ENCODE measurements at regions of chr6 and their contacts with region 1.

Region 1: GRCh38 chr6:160455541-160456213 is 107.5 kb downstream of the SLC22A3 start:
- DNase-seq: peak; percentile 28
- H3K4me3 ChIP-seq: peak overlapping the region in 1 of 3 experiments; percentile 20
- H3K27ac ChIP-seq: no peak overlapping the region
- H3K4me1 ChIP-seq: peaks cover 4% of the 10 kb centered on the region
- H3K27me3 ChIP-seq: no peaks in the 10 kb centered on the region
- CTCF ChIP-seq: peak; percentile 83 to 95

Region 2: GRCh38 chr6:160088069-160088783 is 367.5 kb before region 1 on chr6:
- CTCF ChIA-PET with region 1: no interaction called
- dilution Hi-C with region 1: no loop called
- in situ Hi-C with region 1: no loop called
- intact Hi-C with region 1: loop called (anchors 1 kb)
- DNase-seq: peak; percentile 43
- H3K4me3 ChIP-seq: no peak overlapping the region
- H3K27ac ChIP-seq: no peak overlapping the region
- H3K4me1 ChIP-seq: no peaks in the 10 kb centered on the region
- H3K27me3 ChIP-seq: no peaks in the 10 kb centered on the region
- CTCF ChIP-seq: peak; percentile 74 to 81

Region 3: DNA sequence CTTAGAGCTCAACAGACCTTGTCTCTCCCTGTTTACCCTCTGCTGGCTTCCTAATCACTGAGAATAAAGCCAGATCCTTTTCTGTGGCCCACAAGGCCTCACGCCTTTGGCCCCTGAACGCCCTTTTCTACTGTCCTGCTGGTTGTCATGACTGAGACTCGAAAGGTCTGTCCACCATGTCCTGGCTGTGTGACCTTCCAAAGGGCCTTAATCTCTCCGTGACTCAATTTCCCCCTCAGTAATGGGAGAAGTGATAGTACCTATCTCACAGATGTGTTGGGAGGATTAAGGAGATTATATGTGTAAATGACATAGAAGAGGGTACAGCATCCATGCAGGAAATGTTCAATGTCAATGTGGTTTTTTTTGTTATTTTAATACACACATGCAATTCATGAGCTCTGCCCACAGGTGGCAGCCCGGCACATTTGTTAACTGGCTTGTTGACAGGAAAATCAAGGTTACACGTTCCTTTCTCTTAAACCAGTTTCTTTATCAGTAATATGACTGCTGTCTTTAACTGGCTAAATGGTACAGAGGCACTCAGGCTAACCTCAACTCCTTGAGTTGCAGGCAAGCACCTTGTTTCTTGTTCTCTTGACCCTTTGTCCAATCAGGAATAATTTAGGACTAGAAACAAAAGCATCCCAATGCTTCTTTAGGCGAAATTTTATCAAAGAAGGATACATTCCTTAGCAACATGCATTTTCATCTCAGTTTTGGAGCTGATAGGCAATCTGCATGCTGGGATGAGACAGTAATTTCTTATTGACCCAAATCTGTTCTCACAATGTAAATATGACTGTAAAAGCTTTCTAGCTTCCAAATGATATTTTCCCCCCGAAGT is 317.5 kb before region 1 on chr6:
- CTCF ChIA-PET with region 1: interaction called, 8 read pairs
- dilution Hi-C with region 1: no loop called
- in situ Hi-C with region 1: loop called (anchors 10 to 25 kb)
- intact Hi-C with region 1: loop called (anchors 1 kb)
- DNase-seq: peak; percentile 46
- H3K4me3 ChIP-seq: no peak overlapping the region
- H3K27ac ChIP-seq: no peak overlapping the region
- H3K4me1 ChIP-seq: peaks cover 7% of the 10 kb centered on the region
- H3K27me3 ChIP-seq: no peaks in the 10 kb centered on the region
- CTCF ChIP-seq: peak; percentile 75 to 84

Region 4: GRCh38 chr6:160238751-160239402 is 216.8 kb before region 1 on chr6:
- CTCF ChIA-PET with region 1: no interaction called
- dilution Hi-C with region 1: no loop called
- in situ Hi-C with region 1: no loop called
- intact Hi-C with region 1: loop called (anchors 5 kb)
- DNase-seq: peak; percentile 53
- H3K4me3 ChIP-seq: no peak overlapping the region
- H3K27ac ChIP-seq: peak overlapping the region; percentile 62
- H3K4me1 ChIP-seq: peaks cover 22% of the 10 kb centered on the region
- H3K27me3 ChIP-seq: no peaks in the 10 kb centered on the region
- CTCF ChIP-seq: no peak

Region 5: DNA sequence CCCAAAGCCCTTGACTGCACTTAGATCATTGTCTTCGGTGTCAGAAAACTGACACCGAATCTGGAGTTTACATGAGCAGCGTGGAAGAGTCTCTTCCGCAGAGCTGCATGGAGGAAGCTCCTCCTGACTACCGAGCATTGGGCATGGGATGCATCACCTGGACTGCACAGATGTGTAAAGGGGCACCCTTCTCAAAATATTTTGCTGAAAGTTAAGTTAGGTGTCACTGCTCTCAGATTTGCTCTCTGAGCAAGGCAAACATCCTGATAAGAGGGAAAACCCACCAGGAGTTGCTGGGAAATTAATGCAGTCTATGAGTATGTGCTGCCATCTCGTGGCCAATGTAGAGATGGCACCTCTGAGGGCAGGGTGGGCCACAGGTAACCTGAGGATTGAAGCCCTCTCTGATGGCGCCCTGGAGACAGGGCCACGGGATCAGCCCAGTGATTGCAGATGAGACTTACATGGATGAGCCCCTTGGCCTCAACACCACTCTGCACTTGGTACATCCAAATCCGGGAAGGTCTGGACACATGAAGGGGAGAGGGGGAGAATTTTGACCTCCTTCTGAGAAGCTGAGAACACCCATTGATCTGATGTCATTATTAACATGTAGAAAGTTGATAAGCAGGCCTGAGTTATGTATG is 78.5 kb after region 1 on chr6:
- CTCF ChIA-PET with region 1: no interaction called
- dilution Hi-C with region 1: no loop called
- in situ Hi-C with region 1: no loop called
- intact Hi-C with region 1: loop called (anchors 1 kb)
- DNase-seq: peak; percentile 25
- H3K4me3 ChIP-seq: no peak overlapping the region
- H3K27ac ChIP-seq: no peak overlapping the region
- H3K4me1 ChIP-seq: no peaks in the 10 kb centered on the region
- H3K27me3 ChIP-seq: no peaks in the 10 kb centered on the region
- CTCF ChIP-seq: peak; percentile 92 to 93